Common myeloid progenitor, CD34-positive (primary cell): ENCODE measurements at regions of chr5 and their contacts with region 1.

Region 1: DNA sequence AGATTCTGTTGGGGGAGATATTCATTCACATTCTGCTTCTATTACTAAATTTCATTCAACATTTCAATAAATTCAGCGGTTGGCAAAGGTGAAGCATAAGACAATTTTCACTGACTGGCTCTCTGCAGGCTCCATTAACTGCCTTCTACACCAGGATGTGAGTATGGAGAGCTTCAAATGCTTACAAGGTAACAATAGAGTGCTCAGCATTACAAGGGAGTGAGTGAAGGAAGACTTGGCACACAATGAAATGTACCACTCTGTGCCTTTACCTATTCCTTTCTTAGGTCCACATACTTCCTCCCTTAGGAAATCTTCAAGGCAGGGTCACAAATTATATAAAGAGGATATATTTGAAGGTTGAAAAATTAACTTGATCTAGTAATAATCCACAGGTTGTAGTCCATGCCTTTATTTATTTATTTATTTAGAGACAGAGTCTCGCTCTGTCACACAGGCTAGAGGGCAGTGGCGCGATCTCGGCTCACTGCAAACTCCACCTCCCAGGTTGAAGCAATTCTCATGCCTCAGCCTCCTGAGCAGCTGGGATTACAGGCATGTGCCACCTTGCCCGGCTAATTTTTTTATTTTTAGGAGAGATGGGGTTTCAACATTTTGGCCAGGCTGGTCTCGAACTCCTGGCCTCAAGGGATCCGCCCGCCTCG is 76.6 kb upstream of the FAM169A start:
- DNase-seq: no peak
- H3K4me3 ChIP-seq: no peak overlapping the region
- H3K27ac ChIP-seq: no peak overlapping the region
- H3K4me1 ChIP-seq: peaks cover 0 to 14% (median 8%) of the 10 kb centered on the region in 4 experiments
- H3K27me3 ChIP-seq: no peaks in the 10 kb centered on the region

Region 2: GRCh38 chr5:74927336-74927735 is 15.4 kb before region 1 on chr5:
- CTCF ChIA-PET with region 1: interaction called, 12 read pairs
- POLR2A ChIA-PET with region 1: no interaction called
- DNase-seq: no peak
- H3K4me3 ChIP-seq: no peak overlapping the region
- H3K27ac ChIP-seq: no peak overlapping the region
- H3K4me1 ChIP-seq: no peaks in the 10 kb centered on the region
- H3K27me3 ChIP-seq: no peaks in the 10 kb centered on the region